PC-9 (cell line): ENCODE measurements at regions of chr3 and their contacts with region 1.

Region 1: DNA sequence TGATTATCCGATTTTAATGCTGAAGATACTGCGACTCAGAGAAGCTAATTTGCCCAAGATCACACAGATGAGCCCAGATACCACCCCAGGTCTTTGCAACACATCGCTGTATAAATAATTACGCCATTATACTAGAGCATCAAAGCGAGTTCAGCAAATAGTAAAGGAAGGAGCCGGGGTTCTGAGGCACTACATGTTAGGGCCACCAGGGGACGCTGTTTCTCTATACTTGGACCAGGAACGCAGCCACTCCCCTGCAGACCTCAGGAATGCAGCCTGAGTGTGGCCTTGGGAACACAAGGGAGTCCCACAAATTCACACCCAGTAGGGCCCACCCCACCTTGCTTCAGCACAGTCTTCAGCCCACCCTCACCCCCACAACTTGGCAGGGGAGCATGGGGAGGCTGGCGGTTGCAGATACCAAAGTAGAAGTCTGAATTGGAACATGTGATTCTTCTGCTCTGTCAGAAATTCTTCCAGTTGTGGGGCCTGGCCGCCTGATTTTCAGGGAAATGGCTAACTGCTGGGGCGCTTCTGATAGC is 57.8 kb upstream of the RYK start:
- DNase-seq: peak; percentile 74 to 88
- H3K4me3 ChIP-seq: no peak overlapping the region
- H3K27ac ChIP-seq: peak overlapping the region; percentile 98
- H3K4me1 ChIP-seq: peaks cover 52% of the 10 kb centered on the region
- H3K27me3 ChIP-seq: no peaks in the 10 kb centered on the region
- CTCF ChIP-seq: peak; percentile 99

Region 2: DNA sequence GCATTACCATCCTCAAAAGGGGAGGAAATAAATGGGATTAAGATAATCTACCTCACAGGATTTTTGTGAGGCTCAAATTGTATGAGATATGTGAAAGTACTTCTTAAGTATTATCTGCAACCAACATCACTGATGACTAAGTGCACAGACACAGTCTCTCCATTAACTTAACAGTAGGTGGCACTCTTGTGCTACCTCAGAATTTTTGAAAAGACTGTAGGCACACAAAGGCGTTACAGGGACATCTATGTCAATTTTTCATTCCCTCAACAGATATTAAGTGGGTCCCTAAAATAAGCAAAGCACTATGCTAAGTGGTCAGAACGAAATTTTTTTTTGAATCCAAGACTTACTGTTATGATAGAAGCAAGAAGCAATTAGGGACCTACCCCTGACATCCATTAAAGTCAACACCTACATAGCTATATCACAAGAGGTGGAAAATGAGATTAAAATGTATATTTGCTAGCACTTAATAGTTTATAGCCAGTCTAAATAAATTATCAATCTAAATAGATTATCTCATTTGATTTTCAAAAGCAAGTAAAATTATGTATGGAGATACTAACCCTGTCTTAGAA is 110.7 kb before region 1 on chr3:
- CTCF ChIA-PET with region 1: interaction called, 4 read pairs
- POLR2A ChIA-PET with region 1: no interaction called
- intact Hi-C with region 1: loop called (anchors 1 kb)
- DNase-seq: peak; percentile 18 to 51
- H3K4me3 ChIP-seq: no peak overlapping the region
- H3K27ac ChIP-seq: no peak overlapping the region
- H3K4me1 ChIP-seq: peaks cover 22% of the 10 kb centered on the region
- H3K27me3 ChIP-seq: no peaks in the 10 kb centered on the region
- CTCF ChIP-seq: peak; percentile 81

Region 3: GRCh38 chr3:134336587-134336986 is 28.2 kb after region 1 on chr3:
- CTCF ChIA-PET with region 1: interaction called, 4 read pairs
- POLR2A ChIA-PET with region 1: interaction called, 14 read pairs
- intact Hi-C with region 1: loop called (anchors 1 kb)
- DNase-seq: peak; percentile 55 to 69
- H3K4me3 ChIP-seq: no peak overlapping the region
- H3K27ac ChIP-seq: peak overlapping the region; percentile 97
- H3K4me1 ChIP-seq: peaks cover 66% of the 10 kb centered on the region
- H3K27me3 ChIP-seq: no peaks in the 10 kb centered on the region
- CTCF ChIP-seq: no peak

Region 4: GRCh38 chr3:134364061-134364935 is 55.9 kb after region 1 on chr3:
- CTCF ChIA-PET with region 1: interaction called, 4 read pairs
- POLR2A ChIA-PET with region 1: interaction called, 13 read pairs
- intact Hi-C with region 1: no loop called
- DNase-seq: peak; percentile 95 to 98
- H3K4me3 ChIP-seq: peak overlapping the region; percentile 54
- H3K27ac ChIP-seq: peak overlapping the region; percentile 100
- H3K4me1 ChIP-seq: peaks cover 96% of the 10 kb centered on the region
- H3K27me3 ChIP-seq: no peaks in the 10 kb centered on the region
- CTCF ChIP-seq: no peak

Region 5: DNA sequence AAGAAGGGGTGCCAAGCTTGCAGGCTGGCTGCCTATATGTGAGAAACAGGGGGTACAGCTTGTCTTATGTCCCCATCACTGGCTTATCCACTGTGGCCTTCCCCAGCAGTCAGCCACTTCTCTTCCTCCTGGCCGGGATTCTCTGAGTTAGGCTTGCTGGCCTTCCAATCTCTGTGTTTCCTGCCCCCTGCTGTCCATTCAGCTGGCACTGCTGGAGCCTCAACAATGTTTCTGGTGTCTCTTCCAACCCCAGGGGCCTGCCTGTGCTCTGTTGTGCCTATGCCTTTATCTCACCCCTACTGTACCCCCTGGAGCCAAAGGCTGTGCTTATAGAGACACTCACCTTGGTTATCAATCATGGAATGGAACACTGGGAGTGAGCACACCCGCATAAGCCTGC is 140.9 kb after region 1 on chr3:
- CTCF ChIA-PET with region 1: no interaction called
- POLR2A ChIA-PET with region 1: interaction called, 3 read pairs
- intact Hi-C with region 1: loop called (anchors 1 kb)
- DNase-seq: peak in 1 of 2 experiments; percentile 27
- H3K4me3 ChIP-seq: no peak overlapping the region
- H3K27ac ChIP-seq: no peak overlapping the region
- H3K4me1 ChIP-seq: peaks cover 18% of the 10 kb centered on the region
- H3K27me3 ChIP-seq: no peaks in the 10 kb centered on the region
- CTCF ChIP-seq: peak; percentile 49